ENCODE measurements at regions of chr10 and their contacts with region 1.

Region 1: GRCh38 chr10:86486856-86487255 is 34.7 kb downstream of the WAPL start:
- DNase-seq: no peak
- ATAC-seq: no peak
- H3K4me3 ChIP-seq: no peak overlapping the region
- H3K4me3 Mint-ChIP-seq: no peak overlapping the region
- H3K27ac ChIP-seq: no peak overlapping the region
- H3K27ac Mint-ChIP-seq: peak overlapping the region in 5 of 9 donors; percentile 21 to 81 (median 38)
- H3K4me1 ChIP-seq: no peaks in the 10 kb centered on the region
- H3K4me1 Mint-ChIP-seq: peaks cover 4 to 47% (median 21%) of the 10 kb centered on the region in 7 donors
- H3K27me3 ChIP-seq: no peaks in the 10 kb centered on the region
- H3K27me3 Mint-ChIP-seq: no peaks in the 10 kb centered on the region

Region 2: GRCh38 chr10:86451604-86451960 is 35.3 kb before region 1 on chr10:
- CTCF ChIA-PET with region 1: no interaction called
- POLR2A ChIA-PET with region 1: no interaction called
- intact Hi-C with region 1: no loop called
- DNase-seq: no peak
- ATAC-seq: no peak
- H3K4me3 ChIP-seq: no peak overlapping the region
- H3K4me3 Mint-ChIP-seq: no peak overlapping the region
- H3K27ac ChIP-seq: no peak overlapping the region
- H3K27ac Mint-ChIP-seq: peak overlapping the region in 6 of 9 donors; percentile 5 to 38 (median 22)
- H3K4me1 ChIP-seq: no peaks in the 10 kb centered on the region
- H3K4me1 Mint-ChIP-seq: peaks cover 15 to 45% (median 34%) of the 10 kb centered on the region in 7 donors
- H3K27me3 ChIP-seq: no peaks in the 10 kb centered on the region
- H3K27me3 Mint-ChIP-seq: no peaks in the 10 kb centered on the region

Region 3: DNA sequence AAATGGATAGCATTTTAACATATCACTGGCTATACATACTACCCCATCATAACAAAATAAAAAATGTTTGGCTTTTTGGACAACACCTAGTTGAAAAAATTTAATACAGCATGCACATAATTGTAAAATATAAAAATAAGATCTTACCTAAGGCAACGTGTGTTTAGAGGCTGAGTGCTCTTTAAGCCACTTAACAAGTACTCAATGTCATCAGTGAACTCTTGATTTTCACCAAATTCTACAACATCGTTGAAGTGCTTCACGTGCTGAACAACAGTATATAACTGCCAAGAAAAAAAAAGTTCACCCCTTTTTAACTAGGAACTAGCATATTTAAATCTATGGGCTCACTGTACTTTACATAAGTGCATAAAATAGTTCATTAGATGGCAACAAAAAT is 14.8 kb before region 1 on chr10:
- CTCF ChIA-PET with region 1: no interaction called
- POLR2A ChIA-PET with region 1: no interaction called
- intact Hi-C with region 1: loop called in 1 of 2 experiments (anchors 2 kb)
- DNase-seq: no peak
- ATAC-seq: no peak
- H3K4me3 ChIP-seq: no peak overlapping the region
- H3K4me3 Mint-ChIP-seq: no peak overlapping the region
- H3K27ac ChIP-seq: no peak overlapping the region
- H3K27ac Mint-ChIP-seq: no peak overlapping the region
- H3K4me1 ChIP-seq: no peaks in the 10 kb centered on the region
- H3K4me1 Mint-ChIP-seq: peaks cover 4 to 23% (median 11%) of the 10 kb centered on the region in 7 donors
- H3K27me3 ChIP-seq: no peaks in the 10 kb centered on the region
- H3K27me3 Mint-ChIP-seq: no peaks in the 10 kb centered on the region

Region 4: DNA sequence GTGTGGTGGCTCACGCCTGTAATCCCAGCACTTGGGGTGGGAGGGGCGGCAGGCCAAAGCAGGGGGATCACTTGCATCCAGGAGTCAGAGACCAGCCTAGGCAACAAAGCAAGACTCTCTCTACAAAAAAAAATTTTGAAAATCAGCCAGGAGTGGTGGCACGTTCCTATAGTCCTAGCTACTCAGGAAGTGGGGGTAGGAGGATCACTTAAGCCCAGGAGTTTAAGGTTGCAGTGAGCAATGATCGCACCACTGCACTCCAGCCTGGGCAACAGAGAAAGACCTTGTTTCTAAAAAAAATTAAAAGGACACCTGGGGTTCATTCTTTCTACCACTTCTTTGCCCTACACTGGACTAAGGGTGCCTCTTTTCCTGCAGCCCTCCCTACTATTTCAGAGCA is 19.6 kb after region 1 on chr10:
- CTCF ChIA-PET with region 1: no interaction called
- POLR2A ChIA-PET with region 1: no interaction called
- intact Hi-C with region 1: loop called in 1 of 2 experiments (anchors 2 kb)
- DNase-seq: no peak
- ATAC-seq: no peak
- H3K4me3 ChIP-seq: no peak overlapping the region
- H3K4me3 Mint-ChIP-seq: peak overlapping the region in 3 of 10 donors; percentile 37 to 50 (median 45)
- H3K27ac ChIP-seq: no peak overlapping the region
- H3K27ac Mint-ChIP-seq: peak overlapping the region in 4 of 9 donors; percentile 4 to 81 (median 52)
- H3K4me1 ChIP-seq: peaks cover 2 to 8% of the 10 kb centered on the region in 2 donors
- H3K4me1 Mint-ChIP-seq: peaks cover 19 to 40% (median 30%) of the 10 kb centered on the region in 7 donors
- H3K27me3 ChIP-seq: no peaks in the 10 kb centered on the region
- H3K27me3 Mint-ChIP-seq: no peaks in the 10 kb centered on the region

Region 5: GRCh38 chr10:86744067-86744725 is 257.3 kb after region 1 on chr10:
- CTCF ChIA-PET with region 1: no interaction called
- POLR2A ChIA-PET with region 1: no interaction called
- intact Hi-C with region 1: no loop called
- DNase-seq: no peak
- ATAC-seq: no peak
- H3K4me3 ChIP-seq: no peak overlapping the region
- H3K4me3 Mint-ChIP-seq: no peak overlapping the region
- H3K27ac ChIP-seq: no peak overlapping the region
- H3K27ac Mint-ChIP-seq: no peak overlapping the region
- H3K4me1 ChIP-seq: no peaks in the 10 kb centered on the region
- H3K4me1 Mint-ChIP-seq: peaks cover 0 to 6% (median 0%) of the 10 kb centered on the region in 7 donors
- H3K27me3 ChIP-seq: no peaks in the 10 kb centered on the region
- H3K27me3 Mint-ChIP-seq: peaks cover 5 to 21% (median 9%) of the 10 kb centered on the region in 5 donors